GM10248 (cell line): ENCODE measurements at regions of chr5 and their contacts with region 1.

Region 1: DNA sequence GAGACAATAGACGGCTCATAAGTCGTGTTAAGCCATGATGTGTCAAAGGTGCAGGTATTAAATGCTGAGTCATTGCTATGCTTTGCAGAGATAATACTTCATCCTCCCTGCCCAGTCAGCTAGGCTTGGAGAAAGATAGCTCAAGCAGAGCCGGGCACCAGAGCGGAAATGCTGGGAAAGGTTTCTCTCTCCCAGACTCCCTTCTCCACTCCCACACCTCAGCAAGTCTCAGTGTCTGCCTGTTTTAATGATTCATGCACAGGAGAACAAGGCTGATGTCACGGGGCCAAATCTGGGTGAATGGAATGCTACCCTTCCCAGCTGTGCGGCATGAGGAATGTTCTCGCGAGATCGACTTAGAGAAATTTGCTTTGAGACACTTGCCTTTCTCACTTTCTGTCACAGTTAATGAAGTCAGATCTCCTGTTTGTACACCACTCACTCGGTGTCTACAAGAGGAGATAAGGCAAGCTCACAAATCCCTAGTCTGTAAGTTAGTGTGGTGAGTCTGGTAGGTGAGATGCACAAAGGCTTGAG is 204.4 kb downstream of the EFNA5 start:
- DNase-seq: no peak
- CTCF ChIP-seq: no peak

Region 2: GRCh38 chr5:107456281-107456715 is 10.0 kb before region 1 on chr5:
- CTCF ChIA-PET with region 1: interaction called, 21 read pairs
- POLR2A ChIA-PET with region 1: no interaction called
- DNase-seq: no peak
- CTCF ChIP-seq: no peak

Region 3: DNA sequence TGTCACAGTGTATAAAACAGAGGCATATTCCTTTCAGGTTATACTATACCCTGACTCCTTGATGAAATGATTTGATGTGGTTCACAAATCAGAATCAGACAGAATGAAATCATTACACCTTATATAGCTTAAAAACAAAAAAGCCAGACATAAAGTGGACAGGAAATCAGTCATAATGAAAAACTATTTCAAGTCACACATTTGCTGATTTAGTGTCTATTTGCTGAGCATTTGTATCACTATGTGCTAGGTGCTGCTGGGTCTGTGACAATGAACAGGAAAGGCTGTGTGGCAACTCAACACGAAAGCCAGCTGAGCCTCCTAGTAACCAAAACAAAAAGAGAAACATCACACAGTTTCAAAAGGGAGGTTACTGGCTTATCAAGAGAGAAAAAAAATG is 10.5 kb after region 1 on chr5:
- CTCF ChIA-PET with region 1: interaction called, 10 read pairs
- POLR2A ChIA-PET with region 1: no interaction called
- DNase-seq: peak; percentile 37
- CTCF ChIP-seq: no peak

Region 4: DNA sequence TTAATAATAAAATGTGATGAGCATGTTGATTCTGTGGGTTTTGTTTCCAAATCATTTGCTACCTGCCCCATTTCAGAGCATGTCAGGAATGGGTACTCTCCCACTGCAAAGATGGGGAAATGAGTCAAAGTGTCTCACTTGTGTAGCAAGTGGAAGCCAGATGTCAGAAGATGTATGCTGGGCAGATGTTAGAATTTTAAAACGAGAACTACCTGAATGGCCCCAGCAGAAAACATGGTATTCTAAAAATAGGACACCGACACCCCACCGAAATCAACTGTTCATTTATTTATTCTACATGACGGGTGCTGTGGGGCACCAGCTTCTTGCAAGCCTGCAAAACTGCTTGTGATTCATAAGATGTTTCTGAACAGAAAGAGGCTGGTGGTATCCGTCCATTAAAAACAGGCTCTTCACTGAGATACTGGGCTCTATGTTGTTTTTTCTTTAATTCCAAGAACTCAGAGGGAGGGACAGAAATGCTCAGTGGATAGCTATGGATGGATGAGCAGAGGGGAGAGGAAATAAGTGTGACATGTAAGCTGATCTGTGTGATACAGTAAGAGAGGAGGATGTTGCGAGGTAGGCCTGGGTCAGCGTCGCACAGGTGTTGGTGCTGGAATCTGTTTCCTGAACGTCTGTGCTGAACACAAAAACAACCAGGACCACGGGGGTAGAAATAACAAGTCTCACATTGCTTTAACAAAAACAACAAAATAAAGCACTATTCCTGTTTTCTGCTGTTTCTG is 47.2 kb after region 1 on chr5:
- CTCF ChIA-PET with region 1: no interaction called
- POLR2A ChIA-PET with region 1: no interaction called
- DNase-seq: no peak
- CTCF ChIP-seq: no peak